B cell (primary cell): ENCODE measurements at regions of chr1 and their contacts with region 1.

Region 1: DNA sequence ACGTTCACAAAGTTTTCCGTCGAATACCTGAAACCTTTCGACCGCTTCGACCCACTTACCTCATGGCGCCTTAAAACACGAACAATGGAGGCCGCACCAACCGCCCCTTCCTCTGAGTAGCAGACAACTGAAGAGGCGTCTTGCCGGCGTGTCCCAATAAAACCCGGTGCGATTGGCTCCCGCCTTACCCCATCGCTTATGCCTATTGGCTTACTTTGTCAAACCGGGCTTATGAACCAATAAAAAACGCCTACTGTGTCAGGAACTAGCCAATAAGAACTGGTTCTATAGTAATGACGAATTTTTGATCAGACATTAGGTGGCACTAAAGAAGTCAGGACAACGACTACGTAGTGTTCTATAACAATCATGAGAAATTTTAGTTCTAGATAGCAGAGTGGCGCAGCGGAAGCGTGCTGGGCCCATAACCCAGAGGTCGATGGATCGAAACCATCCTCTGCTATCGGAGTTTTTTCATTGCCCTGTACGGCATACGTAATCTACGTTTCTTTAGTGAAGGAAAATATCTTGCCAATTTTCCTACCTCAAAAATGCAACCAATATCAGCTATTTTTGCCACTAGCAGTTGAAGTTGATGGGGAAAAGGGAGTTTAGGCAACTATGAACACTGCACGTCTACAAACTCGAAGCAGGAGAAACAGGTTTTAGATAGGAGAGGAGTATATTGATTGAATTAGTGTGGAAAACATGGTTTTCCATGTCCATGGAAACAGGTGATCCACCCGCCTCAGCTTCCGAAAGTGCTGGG is at the start of gene ILF2:
- DNase-seq: peak; percentile 99
- ATAC-seq: peak; percentile 90
- H3K4me3 ChIP-seq: peak within 1 kb of the TSS; percentile 74 to 99 (median 94)
- H3K4me3 Mint-ChIP-seq: no peak within 1 kb of the TSS
- H3K27ac ChIP-seq: peak within 1 kb of the TSS; percentile 86 to 95
- H3K27ac Mint-ChIP-seq: no peak within 1 kb of the TSS
- H3K4me1 ChIP-seq: peaks cover 10 to 18% of the 10 kb centered on the region in 2 donors
- H3K4me1 Mint-ChIP-seq: peaks cover 18% of the 10 kb centered on the region
- H3K27me3 ChIP-seq: no peaks in the 10 kb centered on the region
- H3K27me3 Mint-ChIP-seq: peaks cover under 1% of the 10 kb centered on the region
- CTCF ChIP-seq: peak; percentile 26
- total RNA-seq, gene ILF2: 86.5 and 89.8 TPM in 2 replicates

Region 2: DNA sequence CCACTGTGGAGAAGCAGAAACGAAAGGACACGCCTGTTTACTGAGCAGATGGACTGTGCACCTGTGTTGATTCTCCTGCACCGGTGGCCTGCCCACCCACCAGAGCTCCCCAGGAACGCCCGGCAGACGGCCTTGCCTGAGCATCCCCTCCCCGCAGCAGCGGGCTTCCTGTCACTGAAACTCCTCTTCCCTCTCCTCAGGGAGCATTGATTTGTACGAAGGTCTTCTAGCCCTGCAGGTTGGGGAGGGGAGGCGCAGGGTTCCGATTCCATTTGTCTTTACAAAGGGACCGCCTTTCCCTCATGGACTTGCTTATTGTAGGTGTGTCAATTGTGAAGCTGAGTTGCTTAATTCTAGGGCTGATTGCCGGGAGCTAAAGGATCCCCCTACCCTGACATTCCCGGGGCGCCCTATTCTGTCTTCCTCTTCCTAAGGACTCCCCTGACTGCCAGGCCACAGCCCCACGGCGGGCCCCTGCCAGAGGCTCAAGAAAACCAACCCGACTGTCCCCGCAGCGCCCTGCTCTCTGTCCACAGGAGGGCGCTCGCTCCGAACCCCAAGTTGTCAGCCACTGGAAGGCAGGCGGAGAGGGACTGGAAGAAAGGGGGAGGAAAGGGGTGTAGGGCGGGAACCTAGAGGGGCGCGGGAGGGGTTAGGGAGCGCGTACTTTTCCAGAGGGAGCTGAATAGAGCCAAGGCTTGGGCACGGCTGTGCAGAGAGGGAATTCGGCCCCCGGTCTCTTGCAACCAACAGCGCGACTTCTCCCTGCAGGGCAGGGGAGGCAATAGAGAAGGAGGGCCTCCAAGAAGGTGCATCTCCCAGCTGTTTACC is 138.1 kb before region 1 on chr1:
- CTCF ChIA-PET with region 1: interaction called, 3 read pairs
- POLR2A ChIA-PET with region 1: interaction called, 3 read pairs
- intact Hi-C with region 1: loop called (anchors 10 kb)
- DNase-seq: peak; percentile 73
- ATAC-seq: peak; percentile 13
- H3K4me3 ChIP-seq: no peak overlapping the region
- H3K4me3 Mint-ChIP-seq: peak overlapping the region; percentile 47
- H3K27ac ChIP-seq: peak overlapping the region; percentile 2 to 26
- H3K27ac Mint-ChIP-seq: peak overlapping the region; percentile 50
- H3K4me1 ChIP-seq: peaks cover 38 to 48% of the 10 kb centered on the region in 2 donors
- H3K4me1 Mint-ChIP-seq: peaks cover 41% of the 10 kb centered on the region
- H3K27me3 ChIP-seq: no peaks in the 10 kb centered on the region
- H3K27me3 Mint-ChIP-seq: no peaks in the 10 kb centered on the region
- CTCF ChIP-seq: peak; percentile 71

Region 3: DNA sequence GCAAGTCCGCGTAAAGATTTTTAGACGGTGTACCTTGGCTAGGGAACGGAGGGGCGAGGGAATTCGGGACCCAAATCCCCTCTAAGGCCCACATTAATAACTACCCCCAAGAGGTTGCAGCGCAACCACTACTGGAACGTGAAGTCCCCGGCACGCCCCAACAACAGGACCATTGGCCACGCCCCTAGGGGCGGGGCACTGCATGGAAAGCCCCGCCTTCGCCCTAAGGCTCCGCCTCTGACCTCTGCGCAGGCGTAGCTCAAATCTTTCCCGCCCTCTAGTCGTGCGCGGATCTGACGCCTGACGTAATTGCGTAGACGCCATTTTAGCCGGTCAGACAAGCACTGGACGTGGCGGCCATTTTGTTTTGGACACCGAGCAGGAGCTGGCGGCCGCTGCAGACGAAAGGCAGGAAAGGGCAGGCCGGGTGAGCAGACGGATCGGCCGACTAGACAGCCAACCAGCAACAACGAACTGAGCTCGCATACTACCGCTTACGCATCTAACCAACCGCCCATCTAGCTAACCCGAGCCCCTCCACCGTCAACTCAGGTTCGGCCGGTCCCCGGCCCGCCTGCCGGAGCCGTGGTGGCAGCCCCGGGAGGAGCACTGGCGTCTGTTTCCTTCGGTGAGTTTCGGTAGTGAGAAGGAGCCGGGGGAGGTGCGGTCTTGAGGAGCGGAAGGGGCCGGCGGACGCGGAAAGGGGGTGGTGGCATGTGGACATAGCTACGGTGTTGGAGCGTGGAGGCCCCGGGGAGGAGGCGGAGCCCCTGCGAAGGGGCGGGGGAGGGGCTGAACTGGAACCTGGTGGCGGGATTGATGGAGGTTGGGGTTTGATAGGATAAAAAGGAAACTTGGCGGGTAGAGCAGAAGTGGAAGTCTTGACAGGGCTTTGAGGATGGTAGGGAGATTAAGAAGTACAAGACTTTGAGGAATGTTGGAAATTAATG is 37.1 kb before region 1 on chr1 and contains the start of gene CHTOP:
- CTCF ChIA-PET with region 1: no interaction called
- POLR2A ChIA-PET with region 1: interaction called, 7 read pairs
- intact Hi-C with region 1: loop called (anchors 1 kb)
- DNase-seq: peak; percentile 99
- ATAC-seq: peak; percentile 89
- H3K4me3 ChIP-seq: peak within 1 kb of the TSS; percentile 90 to 100 (median 99)
- H3K4me3 Mint-ChIP-seq: peak within 1 kb of the TSS; percentile 97
- H3K27ac ChIP-seq: peak within 1 kb of the TSS; percentile 97 to 99
- H3K27ac Mint-ChIP-seq: peak within 1 kb of the TSS; percentile 100
- H3K4me1 ChIP-seq: peaks cover 9 to 24% of the 10 kb centered on the region in 2 donors
- H3K4me1 Mint-ChIP-seq: peaks cover 39% of the 10 kb centered on the region
- H3K27me3 ChIP-seq: no peaks in the 10 kb centered on the region
- H3K27me3 Mint-ChIP-seq: no peaks in the 10 kb centered on the region
- CTCF ChIP-seq: no peak
- total RNA-seq, gene CHTOP: 156 TPM in 2 replicates

Region 4: DNA sequence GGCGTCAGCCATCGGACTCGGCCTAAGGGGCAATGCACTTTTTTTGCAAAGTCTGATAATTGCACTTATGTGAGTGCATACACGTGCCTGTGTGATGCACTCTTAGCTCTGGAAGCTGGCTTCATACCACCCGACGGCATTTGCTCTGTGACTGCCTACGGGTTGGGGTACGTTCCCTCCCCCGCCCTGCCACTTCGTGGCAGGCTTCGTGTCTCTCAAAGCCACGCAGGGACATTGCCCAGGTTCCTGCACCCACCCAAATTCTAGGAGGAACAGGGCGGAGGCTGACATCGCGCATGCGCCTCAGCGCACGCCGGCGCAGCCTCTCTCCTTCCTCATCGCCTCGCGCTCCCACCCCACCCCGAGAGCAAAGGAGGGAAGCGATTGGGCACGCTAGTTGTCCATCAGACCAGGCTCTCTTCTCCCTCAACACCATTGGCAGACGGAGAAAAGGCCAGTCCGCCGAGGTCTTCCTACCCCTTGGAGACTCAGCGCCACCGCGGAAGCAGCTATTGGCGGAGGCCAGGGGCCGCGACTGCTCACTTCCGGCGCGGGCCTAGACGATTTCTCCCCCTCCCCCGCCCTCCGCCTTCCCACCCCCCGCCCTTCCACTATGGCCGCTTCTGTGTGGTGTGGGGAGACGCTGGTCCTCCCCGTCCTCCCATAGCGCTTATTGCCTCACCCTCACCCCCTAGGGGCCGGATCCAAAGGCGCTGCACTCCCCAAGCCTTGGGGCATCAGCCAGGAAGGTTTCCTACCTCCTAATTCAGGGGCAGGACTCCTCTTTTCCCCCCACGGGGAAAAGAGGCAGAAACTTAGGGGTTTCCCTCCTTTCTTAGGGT is 56.6 kb after region 1 on chr1 and contains the start of gene INTS3:
- CTCF ChIA-PET with region 1: no interaction called
- POLR2A ChIA-PET with region 1: interaction called, 3 read pairs
- intact Hi-C with region 1: loop called (anchors 1 kb)
- DNase-seq: peak; percentile 99
- ATAC-seq: peak; percentile 99
- H3K4me3 ChIP-seq: peak within 1 kb of the TSS; percentile 78 to 99 (median 91)
- H3K4me3 Mint-ChIP-seq: peak within 1 kb of the TSS; percentile 84
- H3K27ac ChIP-seq: peak within 1 kb of the TSS; percentile 97 to 98
- H3K27ac Mint-ChIP-seq: peak within 1 kb of the TSS; percentile 86
- H3K4me1 ChIP-seq: peaks cover 9 to 16% of the 10 kb centered on the region in 2 donors
- H3K4me1 Mint-ChIP-seq: peaks cover 36% of the 10 kb centered on the region
- H3K27me3 ChIP-seq: no peaks in the 10 kb centered on the region
- H3K27me3 Mint-ChIP-seq: no peaks in the 10 kb centered on the region
- CTCF ChIP-seq: no peak
- total RNA-seq, gene INTS3: 69.1 and 69.3 TPM in 2 replicates

Region 5: DNA sequence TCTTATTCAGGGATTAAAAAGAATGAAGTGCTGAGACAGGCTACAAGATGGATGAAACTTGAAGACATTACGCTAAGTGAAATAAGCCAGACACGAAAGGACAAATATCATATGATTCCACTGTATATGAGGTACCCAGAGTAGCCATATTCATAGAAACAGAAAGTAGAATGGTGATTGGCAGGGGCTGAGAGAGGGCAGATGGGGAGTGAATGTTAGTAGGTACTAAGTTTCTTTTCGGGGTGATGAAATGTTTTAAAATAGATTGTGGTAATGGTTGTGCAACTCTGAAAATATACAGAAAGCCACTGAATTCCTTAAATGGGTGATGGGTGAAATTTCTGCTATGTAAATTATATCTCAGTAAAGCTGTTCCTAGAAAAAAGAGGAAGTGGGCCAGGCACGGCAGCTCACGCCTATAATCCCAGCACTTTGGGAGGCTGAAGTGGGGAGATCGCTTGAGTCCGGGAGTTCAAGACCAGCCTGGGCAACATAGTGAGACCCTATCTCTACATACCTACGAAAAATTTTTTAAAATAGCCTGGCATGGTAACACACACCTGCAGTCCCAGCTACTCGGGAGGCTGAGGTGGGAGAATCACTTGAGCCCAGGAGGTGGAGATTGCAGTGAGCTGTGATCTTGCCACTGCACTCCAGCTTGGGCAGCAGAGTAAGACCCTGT is 120.1 kb after region 1 on chr1:
- CTCF ChIA-PET with region 1: no interaction called
- POLR2A ChIA-PET with region 1: no interaction called
- intact Hi-C with region 1: loop called (anchors 1 kb)
- DNase-seq: peak; percentile 86
- ATAC-seq: peak; percentile 94
- H3K4me3 ChIP-seq: peak overlapping the region in 4 of 5 experiments; percentile 11 to 59 (median 44)
- H3K4me3 Mint-ChIP-seq: peak overlapping the region; percentile 59
- H3K27ac ChIP-seq: peak overlapping the region; percentile 91 to 92
- H3K27ac Mint-ChIP-seq: peak overlapping the region; percentile 95
- H3K4me1 ChIP-seq: peaks cover 28 to 34% of the 10 kb centered on the region in 2 donors
- H3K4me1 Mint-ChIP-seq: peaks cover 36% of the 10 kb centered on the region
- H3K27me3 ChIP-seq: no peaks in the 10 kb centered on the region
- H3K27me3 Mint-ChIP-seq: no peaks in the 10 kb centered on the region
- CTCF ChIP-seq: no peak

Region 6: GRCh38 chr1:153816283-153816889 is 145.3 kb after region 1 on chr1:
- CTCF ChIA-PET with region 1: no interaction called
- POLR2A ChIA-PET with region 1: no interaction called
- intact Hi-C with region 1: no loop called
- DNase-seq: no peak
- ATAC-seq: no peak
- H3K4me3 ChIP-seq: no peak overlapping the region
- H3K4me3 Mint-ChIP-seq: no peak overlapping the region
- H3K27ac ChIP-seq: no peak overlapping the region
- H3K27ac Mint-ChIP-seq: no peak overlapping the region
- H3K4me1 ChIP-seq: peaks cover 0 to 1% of the 10 kb centered on the region in 2 donors
- H3K4me1 Mint-ChIP-seq: peaks cover 3% of the 10 kb centered on the region
- H3K27me3 ChIP-seq: no peaks in the 10 kb centered on the region
- H3K27me3 Mint-ChIP-seq: no peaks in the 10 kb centered on the region
- CTCF ChIP-seq: no peak

Region 7: GRCh38 chr1:153916297-153916696 is 245.3 kb after region 1 on chr1:
- CTCF ChIA-PET with region 1: no interaction called
- POLR2A ChIA-PET with region 1: no interaction called
- intact Hi-C with region 1: no loop called
- DNase-seq: no peak
- ATAC-seq: no peak
- H3K4me3 ChIP-seq: no peak overlapping the region
- H3K4me3 Mint-ChIP-seq: no peak overlapping the region
- H3K27ac ChIP-seq: no peak overlapping the region
- H3K27ac Mint-ChIP-seq: no peak overlapping the region
- H3K4me1 ChIP-seq: peaks cover 20 to 24% of the 10 kb centered on the region in 2 donors
- H3K4me1 Mint-ChIP-seq: peaks cover 49% of the 10 kb centered on the region
- H3K27me3 ChIP-seq: no peaks in the 10 kb centered on the region
- H3K27me3 Mint-ChIP-seq: no peaks in the 10 kb centered on the region
- CTCF ChIP-seq: no peak